ENCODE measurements at regions of chr17 and their contacts with region 1.

Region 1: DNA sequence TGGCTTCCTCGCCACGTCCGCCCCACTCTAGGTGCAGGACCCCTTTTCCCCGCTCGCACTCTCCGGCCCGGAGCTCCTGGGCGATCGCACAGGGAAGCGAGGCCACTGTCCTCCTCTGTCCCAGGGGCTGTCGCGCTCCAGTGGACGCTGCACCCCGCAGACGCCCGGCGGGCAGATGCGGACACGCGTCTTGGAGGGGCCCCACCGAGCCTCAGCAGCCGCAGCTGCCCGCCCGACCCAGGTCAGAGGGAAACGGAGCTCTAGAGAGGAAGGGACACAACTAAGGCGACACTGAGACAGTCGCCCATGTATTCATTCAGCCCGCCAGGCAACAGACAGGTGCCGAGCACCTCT is 726 bp upstream of the SLC13A5 start:
- DNase-seq: no peak
- ATAC-seq: no peak
- H3K4me3 ChIP-seq: no peak overlapping the region
- H3K27ac ChIP-seq: no peak overlapping the region
- H3K4me1 ChIP-seq: no peaks in the 10 kb centered on the region
- H3K27me3 ChIP-seq: no peaks in the 10 kb centered on the region
- CTCF ChIP-seq: no peak

Region 2: DNA sequence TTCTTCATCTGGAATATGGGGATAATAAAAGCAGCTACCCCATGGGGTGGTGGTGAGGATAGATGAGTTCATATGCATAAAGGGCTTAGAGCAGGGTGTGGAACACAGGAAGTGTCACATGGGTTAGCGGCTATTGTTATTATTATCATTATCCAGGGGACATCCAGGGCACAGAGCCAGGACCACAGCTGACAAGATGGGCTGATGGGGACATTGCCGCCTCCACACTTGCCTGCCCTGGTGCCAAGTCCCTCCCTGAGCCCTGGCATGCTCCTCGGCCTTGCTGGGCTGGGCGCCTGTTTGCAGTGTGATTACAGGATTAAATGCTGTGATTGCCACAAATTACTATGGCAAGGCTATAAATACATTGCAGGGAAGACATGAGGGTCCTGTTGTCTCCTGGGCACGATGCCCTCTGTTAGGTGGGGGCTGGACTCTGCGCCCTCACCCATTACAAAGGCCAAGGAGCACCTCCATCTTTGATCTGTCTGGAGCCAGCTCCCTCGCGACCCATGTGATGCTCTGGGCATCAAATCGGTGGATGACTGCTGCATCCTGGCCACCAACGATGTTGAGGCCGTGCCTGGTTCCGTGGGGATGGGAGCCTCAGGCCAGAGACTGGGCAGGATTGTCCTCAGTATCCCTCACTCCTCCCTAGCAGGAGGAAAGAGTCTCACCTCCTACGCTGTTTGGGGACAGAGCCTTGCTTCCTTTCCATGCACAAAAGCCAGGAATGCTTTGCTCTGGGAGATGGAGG is 226.5 kb before region 1 on chr17:
- CTCF ChIA-PET with region 1: no interaction called
- POLR2A ChIA-PET with region 1: no interaction called
- in situ Hi-C with region 1: no loop called
- intact Hi-C with region 1: no loop called
- DNase-seq: no peak
- ATAC-seq: no peak
- H3K4me3 ChIP-seq: no peak overlapping the region
- H3K27ac ChIP-seq: no peak overlapping the region
- H3K4me1 ChIP-seq: no peaks in the 10 kb centered on the region
- H3K27me3 ChIP-seq: no peaks in the 10 kb centered on the region; the same call in 1 of the 2 replicates
- CTCF ChIP-seq: no peak

Region 3: GRCh38 chr17:6627019-6627418 is 86.9 kb before region 1 on chr17:
- CTCF ChIA-PET with region 1: no interaction called
- POLR2A ChIA-PET with region 1: interaction called, 11 read pairs
- in situ Hi-C with region 1: no loop called
- intact Hi-C with region 1: no loop called
- DNase-seq: no peak
- ATAC-seq: no peak
- H3K4me3 ChIP-seq: no peak overlapping the region
- H3K27ac ChIP-seq: no peak overlapping the region
- H3K4me1 ChIP-seq: no peaks in the 10 kb centered on the region
- H3K27me3 ChIP-seq: no peaks in the 10 kb centered on the region
- CTCF ChIP-seq: no peak

Region 4: DNA sequence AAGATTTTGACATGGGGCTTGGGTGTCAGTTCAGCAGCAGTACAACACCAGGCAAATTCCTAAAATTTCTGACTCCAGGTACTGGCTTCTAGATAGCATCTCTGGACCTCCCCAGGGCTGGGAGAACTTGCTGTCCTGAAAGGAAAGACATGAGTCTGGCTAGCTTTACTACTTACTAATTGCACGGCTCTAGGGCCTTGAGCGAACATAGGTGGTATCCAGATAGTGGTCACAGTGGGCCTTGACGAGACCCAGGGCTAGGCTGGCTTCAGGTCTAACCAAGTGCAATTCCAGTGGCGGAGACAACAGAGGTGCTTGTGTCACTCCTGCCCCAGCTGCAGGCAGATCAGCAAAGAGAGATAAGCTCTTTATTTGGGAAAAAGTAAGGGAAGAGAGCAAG is 15.6 kb after region 1 on chr17:
- CTCF ChIA-PET with region 1: no interaction called
- POLR2A ChIA-PET with region 1: interaction called, 14 read pairs
- in situ Hi-C with region 1: no loop called
- intact Hi-C with region 1: no loop called
- DNase-seq: no peak
- ATAC-seq: no peak
- H3K4me3 ChIP-seq: no peak overlapping the region
- H3K27ac ChIP-seq: no peak overlapping the region
- H3K4me1 ChIP-seq: no peaks in the 10 kb centered on the region
- H3K27me3 ChIP-seq: peaks cover 2% of the 10 kb centered on the region
- CTCF ChIP-seq: no peak

Region 5: GRCh38 chr17:6761779-6762178 is 47.9 kb after region 1 on chr17:
- CTCF ChIA-PET with region 1: no interaction called
- POLR2A ChIA-PET with region 1: no interaction called
- in situ Hi-C with region 1: no loop called
- intact Hi-C with region 1: no loop called
- DNase-seq: no peak
- ATAC-seq: no peak
- H3K4me3 ChIP-seq: no peak overlapping the region
- H3K27ac ChIP-seq: no peak overlapping the region
- H3K4me1 ChIP-seq: no peaks in the 10 kb centered on the region
- H3K27me3 ChIP-seq: no peaks in the 10 kb centered on the region
- CTCF ChIP-seq: no peak

Measured in Panc1 (cell line).